Ovary (tissue), 10 donors: ENCODE measurements at regions of chr22 and their contacts with region 1.

Region 1: GRCh38 chr22:48574776-48575565 is 1252.7 kb downstream of the BRD1 start:
- DNase-seq: peak; percentile 30 to 84 (median 73)
- H3K4me3 ChIP-seq: no peak overlapping the region
- H3K27ac ChIP-seq: no peak overlapping the region
- H3K4me1 ChIP-seq: peaks cover 2% of the 10 kb centered on the region
- H3K27me3 ChIP-seq: no peaks in the 10 kb centered on the region
- CTCF ChIP-seq: peak in 2 of 3 donors; percentile 54 to 92
- EP300 ChIP-seq: no peak
- POLR2A ChIP-seq: no peak

Region 2: GRCh38 chr22:49305214-49305909 is 730.4 kb after region 1 on chr22:
- intact Hi-C with region 1: loop called in 2 of 4 experiments (anchors 5 kb)
- DNase-seq: peak; percentile 27 to 78 (median 62)
- H3K4me3 ChIP-seq: no peak overlapping the region
- H3K27ac ChIP-seq: no peak overlapping the region
- H3K4me1 ChIP-seq: no peaks in the 10 kb centered on the region
- H3K27me3 ChIP-seq: no peaks in the 10 kb centered on the region
- CTCF ChIP-seq: peak in 2 of 3 donors; percentile 58 to 85
- EP300 ChIP-seq: no peak
- POLR2A ChIP-seq: no peak

Region 3: GRCh38 chr22:49632199-49633009 is 1057.4 kb after region 1 on chr22:
- intact Hi-C with region 1: loop called in 1 of 4 experiments (anchors 5 kb)
- DNase-seq: peak; percentile 49 to 81 (median 62)
- H3K4me3 ChIP-seq: peak overlapping the region; percentile 26
- H3K27ac ChIP-seq: no peak overlapping the region
- H3K4me1 ChIP-seq: peaks cover 8% of the 10 kb centered on the region
- H3K27me3 ChIP-seq: no peaks in the 10 kb centered on the region
- CTCF ChIP-seq: peak; percentile 46 to 60 (median 60)
- EP300 ChIP-seq: no peak
- POLR2A ChIP-seq: no peak